Posterior vena cava (tissue), 2 donors: ENCODE measurements at regions of chr10 and their contacts with region 1.

Region 1: GRCh38 chr10:1613511-1614131 is 123.7 kb downstream of the ADARB2 start:
- DNase-seq: no peak

Region 2: GRCh38 chr10:1628757-1629156 is 15.1 kb after region 1 on chr10:
- intact Hi-C with region 1: loop called in 1 of 2 experiments (anchors 1 kb)
- DNase-seq: no peak